Endothelial cell of umbilical vein (primary cell): ENCODE measurements at regions of chr6 and their contacts with region 1.

Region 1: GRCh38 chr6:110958329-110959192 is at the start of gene GTF3C6:
- DNase-seq: peak; percentile 93
- H3K4me3 ChIP-seq: peak within 1 kb of the TSS; percentile 76 to 94 (median 86)
- H3K27ac ChIP-seq: peak within 1 kb of the TSS; percentile 94
- H3K4me1 ChIP-seq: peaks cover 6% of the 10 kb centered on the region
- H3K27me3 ChIP-seq: peaks cover 0 to 2% of the 10 kb centered on the region in 2 experiments
- CTCF ChIP-seq: no peak
- POLR2A ChIP-seq: peak; percentile 97
- total RNA-seq, gene GTF3C6: 88.1 and 96.4 TPM in 2 replicates

Region 2: GRCh38 chr6:110971468-110971867 is 12.9 kb after region 1 on chr6:
- CTCF ChIA-PET with region 1: interaction called, 5 read pairs
- POLR2A ChIA-PET with region 1: interaction called, 11 read pairs
- dilution Hi-C with region 1: no loop called
- intact Hi-C with region 1: no loop called
- DNase-seq: peak; percentile 13
- H3K4me3 ChIP-seq: no peak overlapping the region
- H3K27ac ChIP-seq: no peak overlapping the region
- H3K4me1 ChIP-seq: no peaks in the 10 kb centered on the region
- H3K27me3 ChIP-seq: no peaks in the 10 kb centered on the region
- CTCF ChIP-seq: no peak
- POLR2A ChIP-seq: no peak

Region 3: DNA sequence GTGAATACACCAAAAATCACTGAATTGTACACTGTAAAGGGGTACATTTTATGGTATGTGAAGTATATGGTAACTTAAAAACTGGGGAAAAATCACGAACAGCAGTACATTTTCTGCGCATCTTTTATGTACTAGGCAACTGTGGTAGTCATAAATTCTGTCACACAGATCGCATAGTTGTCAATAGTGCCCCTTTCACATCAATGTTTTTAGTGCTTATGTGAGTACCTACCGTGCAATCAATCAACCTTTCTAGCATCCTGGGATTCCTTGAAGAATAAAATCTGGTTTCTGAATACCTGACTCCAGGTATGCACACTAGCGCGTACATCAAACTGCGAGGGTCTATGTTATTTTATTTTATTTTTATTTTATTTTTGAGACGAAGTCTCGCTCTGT is 22.6 kb after region 1 on chr6:
- CTCF ChIA-PET with region 1: interaction called, 6 read pairs
- POLR2A ChIA-PET with region 1: interaction called, 4 read pairs
- dilution Hi-C with region 1: no loop called
- intact Hi-C with region 1: loop called (anchors 1 kb)
- DNase-seq: peak; percentile 33
- H3K4me3 ChIP-seq: peak overlapping the region; percentile 53 to 86 (median 75)
- H3K27ac ChIP-seq: peak overlapping the region; percentile 94
- H3K4me1 ChIP-seq: peaks cover 9% of the 10 kb centered on the region
- H3K27me3 ChIP-seq: no peaks in the 10 kb centered on the region
- CTCF ChIP-seq: no peak
- POLR2A ChIP-seq: no peak